AG04450 (cell line): ENCODE measurements at regions of chr6 and their contacts with region 1.

Region 1: GRCh38 chr6:69796642-69797390 is at the start of gene LMBRD1:
- DNase-seq: peak; percentile 88
- H3K4me3 ChIP-seq: peak within 1 kb of the TSS; percentile 86
- H3K27ac ChIP-seq: peak within 1 kb of the TSS; percentile 71
- H3K27me3 ChIP-seq: no peaks in the 10 kb centered on the region
- CTCF ChIP-seq: peak; percentile 73
- polyA plus RNA-seq, gene LMBRD1: 17.9 and 27.3 TPM in 2 replicates

Region 2: DNA sequence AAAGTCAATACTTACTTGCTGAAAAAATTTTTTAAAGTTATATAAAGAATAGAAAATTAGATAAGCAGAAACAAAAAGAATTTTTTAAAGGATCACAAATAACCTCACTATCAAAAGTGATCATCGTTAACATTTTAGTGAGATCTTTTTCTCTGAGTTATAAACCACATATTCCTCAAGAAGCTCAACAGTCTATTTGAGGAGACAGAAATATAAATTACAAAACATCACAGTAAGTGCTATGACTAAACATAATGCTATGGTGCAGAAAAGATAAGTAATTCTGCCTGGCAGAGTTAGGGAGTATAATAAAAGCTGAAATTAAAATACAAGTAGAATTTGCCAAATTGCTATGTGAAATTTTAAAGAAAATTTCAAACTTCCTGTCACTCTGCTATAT is 226.7 kb before region 1 on chr6:
- CTCF ChIA-PET with region 1: no interaction called
- POLR2A ChIA-PET with region 1: no interaction called
- DNase-seq: no peak
- H3K4me3 ChIP-seq: no peak overlapping the region
- H3K27ac ChIP-seq: no peak overlapping the region
- H3K27me3 ChIP-seq: no peaks in the 10 kb centered on the region
- CTCF ChIP-seq: no peak

Region 3: GRCh38 chr6:69732640-69733039 is 64.2 kb before region 1 on chr6:
- CTCF ChIA-PET with region 1: interaction called, 22 read pairs
- POLR2A ChIA-PET with region 1: no interaction called
- DNase-seq: no peak
- H3K4me3 ChIP-seq: no peak overlapping the region
- H3K27ac ChIP-seq: no peak overlapping the region
- H3K27me3 ChIP-seq: no peaks in the 10 kb centered on the region
- CTCF ChIP-seq: peak; percentile 22

Region 4: DNA sequence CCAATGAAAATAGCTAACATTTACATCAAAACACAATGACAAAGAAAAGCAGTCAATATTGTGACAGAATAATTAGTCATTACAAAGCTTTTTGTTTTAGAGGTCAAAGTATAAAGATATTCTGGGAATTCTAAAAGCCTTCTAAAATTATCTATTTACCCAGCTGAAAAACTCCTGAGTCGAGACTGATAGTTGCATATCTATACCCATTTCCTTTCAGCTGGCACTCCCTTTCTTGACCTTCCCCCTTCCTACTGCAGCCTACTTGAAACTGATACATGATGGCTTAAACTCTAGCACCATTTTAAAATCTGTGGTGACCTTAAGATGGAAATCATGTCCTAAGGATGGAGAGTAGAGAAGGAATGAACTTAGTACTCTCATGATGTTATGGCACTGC is 38.6 kb before region 1 on chr6:
- CTCF ChIA-PET with region 1: interaction called, 20 read pairs
- POLR2A ChIA-PET with region 1: no interaction called
- DNase-seq: no peak
- H3K4me3 ChIP-seq: no peak overlapping the region
- H3K27ac ChIP-seq: no peak overlapping the region
- H3K27me3 ChIP-seq: no peaks in the 10 kb centered on the region
- CTCF ChIP-seq: no peak

Region 5: DNA sequence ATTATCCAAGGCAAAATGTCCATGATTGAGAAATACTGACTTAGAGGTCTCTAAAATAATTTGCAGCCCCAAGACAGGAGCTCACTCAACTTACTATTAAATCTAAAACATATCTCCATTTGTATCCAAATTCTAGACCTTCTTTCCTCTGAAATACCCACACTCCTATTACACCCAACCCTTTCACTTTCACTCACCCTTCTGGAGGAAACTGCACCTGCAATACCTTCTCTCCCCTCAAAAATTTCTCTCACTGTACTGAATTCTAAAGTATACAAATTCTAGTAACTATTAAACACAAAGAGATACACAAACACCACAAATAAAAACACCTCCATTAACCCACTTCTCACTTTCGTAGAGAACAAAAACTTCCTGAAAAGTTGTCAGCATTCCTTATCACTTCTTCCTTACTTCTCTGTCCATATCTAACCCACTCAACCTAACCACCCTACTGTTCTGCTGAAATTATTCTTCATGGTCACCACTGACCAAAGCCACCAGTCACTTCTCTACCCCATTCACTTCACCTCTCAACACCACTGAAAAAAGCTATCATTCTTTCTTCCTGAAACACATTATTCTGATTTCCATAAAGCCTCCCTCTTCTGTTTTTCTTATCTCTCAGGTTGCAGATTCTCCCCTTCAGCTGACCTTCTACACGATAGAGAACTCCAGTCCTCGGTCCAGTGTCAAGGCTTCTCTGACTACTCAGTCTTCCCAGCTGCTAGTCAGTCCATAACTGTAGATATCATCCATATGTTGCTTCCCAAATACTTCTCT is 12.0 kb before region 1 on chr6:
- CTCF ChIA-PET with region 1: interaction called, 60 read pairs
- POLR2A ChIA-PET with region 1: interaction called, 3 read pairs
- DNase-seq: no peak
- H3K4me3 ChIP-seq: no peak overlapping the region
- H3K27ac ChIP-seq: no peak overlapping the region
- H3K27me3 ChIP-seq: no peaks in the 10 kb centered on the region
- CTCF ChIP-seq: no peak

Region 6: GRCh38 chr6:69852706-69853105 is 55.9 kb after region 1 on chr6:
- CTCF ChIA-PET with region 1: interaction called, 11 read pairs
- POLR2A ChIA-PET with region 1: no interaction called
- DNase-seq: no peak
- H3K4me3 ChIP-seq: no peak overlapping the region
- H3K27ac ChIP-seq: no peak overlapping the region
- H3K27me3 ChIP-seq: no peaks in the 10 kb centered on the region
- CTCF ChIP-seq: no peak